ENCODE measurements at regions of chr12 and their contacts with region 1.

Region 1: DNA sequence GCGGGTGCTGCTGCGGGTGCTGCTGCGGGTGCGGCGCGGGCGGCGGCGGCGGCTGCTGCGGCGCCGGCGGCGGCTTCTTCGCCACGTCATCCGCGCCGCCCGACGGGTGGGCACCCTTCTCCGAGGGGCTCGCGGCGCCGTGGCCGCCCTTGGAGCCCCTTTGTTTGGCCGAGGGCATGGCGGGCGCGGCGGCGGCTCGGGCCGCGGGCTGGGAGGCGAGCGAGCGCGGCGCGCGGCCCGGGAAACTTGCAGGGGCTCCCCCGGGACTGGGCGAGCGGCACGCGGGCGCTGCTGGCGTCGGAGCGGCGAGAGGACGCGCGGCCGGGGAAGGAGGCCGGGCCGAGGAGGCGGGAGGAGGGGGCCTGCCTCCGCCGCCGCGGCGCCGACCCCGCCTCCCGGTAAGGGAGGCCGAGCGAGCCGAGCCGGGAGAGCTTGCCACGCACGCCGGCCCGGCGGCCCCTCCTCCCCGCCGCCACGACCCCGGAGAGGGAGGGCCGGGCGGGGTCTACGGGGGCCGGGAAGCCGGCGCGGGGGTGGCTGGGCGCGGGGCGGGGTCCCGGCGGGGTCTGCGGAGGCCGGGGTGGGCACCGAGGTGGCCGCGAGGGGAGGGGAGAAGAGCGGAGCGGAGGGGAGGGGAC is at the start of gene CKAP4:
- DNase-seq: peak; percentile 65 to 74
- ATAC-seq: peak; percentile 64 to 75
- H3K4me3 ChIP-seq: peak within 1 kb of the TSS; percentile 98
- H3K27ac ChIP-seq: peak within 1 kb of the TSS; percentile 95 to 97
- H3K4me1 ChIP-seq: peaks cover 29% of the 10 kb centered on the region
- CTCF ChIP-seq: no peak; the same call in 2 of the 3 replicates
- EP300 ChIP-seq: no peak
- POLR2A ChIP-seq: peak; percentile 68
- RAD21 ChIP-seq: no peak
- polyA plus RNA-seq, gene CKAP4: 96.5 and 108 TPM in 2 replicates

Region 2: GRCh38 chr12:105357162-105357691 is 890.6 kb before region 1 on chr12:
- CTCF ChIA-PET with region 1: no interaction called
- POLR2A ChIA-PET with region 1: interaction called, 17 read pairs
- DNase-seq: peak in 1 of 2 experiments; percentile 60
- ATAC-seq: peak; percentile 65 to 78
- H3K4me3 ChIP-seq: 0 out of 3 replicates have a peak overlapping the region, but pooled peaks have one; percentile 3
- H3K27ac ChIP-seq: peak overlapping the region; percentile 67 to 80; a peak in 5 of 6 replicates
- H3K4me1 ChIP-seq: peaks cover 73% of the 10 kb centered on the region
- CTCF ChIP-seq: no peak
- EP300 ChIP-seq: peak in 1 of 2 experiments; percentile 64; a peak in 1 of 5 replicates
- POLR2A ChIP-seq: no peak
- RAD21 ChIP-seq: no peak

Region 3: DNA sequence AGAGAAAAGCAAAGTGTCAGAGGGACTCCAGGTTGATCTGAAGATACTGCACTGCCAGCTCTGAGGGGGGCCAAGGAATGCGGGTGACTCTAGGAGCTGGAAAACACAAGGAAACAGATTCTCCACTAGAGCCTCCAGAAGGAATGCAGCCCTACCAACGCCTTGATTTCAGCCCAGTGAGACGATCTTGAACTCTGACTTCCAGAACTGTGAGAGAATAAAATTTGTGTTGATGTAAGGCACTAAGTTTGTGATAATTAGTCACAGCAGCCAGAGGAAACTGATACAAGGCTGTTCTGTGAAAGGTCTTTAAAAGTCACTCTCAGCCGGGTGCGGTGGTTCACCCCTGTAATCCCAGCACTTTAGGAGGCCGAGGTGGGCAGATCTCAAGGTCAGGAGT is 34.1 kb before region 1 on chr12:
- CTCF ChIA-PET with region 1: no interaction called
- POLR2A ChIA-PET with region 1: no interaction called
- DNase-seq: no peak
- ATAC-seq: no peak
- H3K4me3 ChIP-seq: no peak overlapping the region
- H3K27ac ChIP-seq: no peak overlapping the region
- H3K4me1 ChIP-seq: no peaks in the 10 kb centered on the region
- CTCF ChIP-seq: no peak
- EP300 ChIP-seq: no peak
- POLR2A ChIP-seq: no peak
- RAD21 ChIP-seq: no peak

Region 4: GRCh38 chr12:106302401-106303201 is 54.8 kb after region 1 on chr12 and contains the start of gene TCP11L2:
- CTCF ChIA-PET with region 1: interaction called, 4 read pairs
- POLR2A ChIA-PET with region 1: interaction called, 12 read pairs
- DNase-seq: peak; percentile 69 to 83
- ATAC-seq: peak; percentile 84 to 87
- H3K4me3 ChIP-seq: peak within 1 kb of the TSS; percentile 86
- H3K27ac ChIP-seq: peak within 1 kb of the TSS; percentile 98 to 100
- H3K4me1 ChIP-seq: peaks cover 31% of the 10 kb centered on the region
- CTCF ChIP-seq: no peak
- EP300 ChIP-seq: no peak
- POLR2A ChIP-seq: no peak
- RAD21 ChIP-seq: no peak
- polyA plus RNA-seq, gene TCP11L2: 16.6 and 19.7 TPM in 2 replicates

Measured in A549 (cell line).